ENCODE measurements at regions of chr5 and their contacts with region 1.

Region 1: GRCh38 chr5:132490486-132491367 is at the start of gene IRF1:
- DNase-seq: peak; percentile 97 to 98 (median 98)
- ATAC-seq: peak; percentile 87 to 94 (median 92)
- H3K4me3 ChIP-seq: peak within 1 kb of the TSS; percentile 63 to 97 (median 86)
- H3K27ac ChIP-seq: peak within 1 kb of the TSS; percentile 94 to 100 (median 98)
- H3K4me1 ChIP-seq: peaks cover 12 to 81% (median 61%) of the 10 kb centered on the region in 12 donors
- H3K27me3 ChIP-seq: no peaks in the 10 kb centered on the region
- CTCF ChIP-seq: peak in 2 of 12 donors; percentile 12 to 45
- POLR2A ChIP-seq: peak; percentile 53 to 96
- total RNA-seq, gene IRF1: 9.2 to 190 (median 18.4) TPM

Region 2: DNA sequence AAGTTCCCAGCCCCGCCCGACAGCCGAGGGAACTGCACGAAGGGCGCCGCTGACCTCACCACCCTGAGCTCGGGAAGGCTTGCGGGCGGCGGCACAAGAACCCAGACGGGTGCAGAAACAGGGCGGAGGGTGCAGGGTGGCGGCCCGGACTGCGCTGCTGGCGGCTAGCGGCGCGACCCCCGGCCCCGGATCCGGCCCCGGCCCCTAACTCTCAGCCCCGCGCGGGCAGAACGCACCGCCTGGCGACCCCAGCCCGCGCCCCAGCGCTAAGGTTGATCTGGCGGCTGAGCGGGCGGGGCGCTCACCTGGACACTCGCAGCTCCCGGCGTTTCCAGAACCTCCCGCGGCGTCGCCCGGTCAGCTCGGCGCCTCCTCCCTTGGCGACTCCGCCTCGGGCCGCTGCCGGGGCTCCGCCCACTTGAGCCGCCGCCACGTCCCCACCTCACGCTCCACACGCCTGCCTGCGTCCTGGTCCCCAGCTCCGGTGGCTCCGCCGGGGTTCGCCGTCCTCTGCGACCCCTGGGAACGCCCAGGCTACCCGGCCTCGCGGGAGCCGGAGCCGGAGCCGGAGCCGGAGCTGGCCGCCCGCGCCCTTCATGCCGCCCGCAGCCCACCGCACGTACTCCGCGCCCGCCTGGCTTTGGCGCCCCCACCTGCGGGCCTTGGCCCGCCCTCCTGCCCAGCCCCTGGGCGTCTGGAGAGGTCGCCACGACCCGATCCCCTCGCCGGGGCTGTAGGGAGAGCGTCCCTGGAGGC is 263.1 kb before region 1 on chr5 and contains the start of gene P4HA2:
- intact Hi-C with region 1: loop called in 1 of 10 experiments (anchors 10 kb)
- DNase-seq: peak; percentile 84 to 91 (median 89)
- ATAC-seq: peak; percentile 63 to 89 (median 82)
- H3K4me3 ChIP-seq: peak within 1 kb of the TSS; percentile 67 to 98 (median 86)
- H3K27ac ChIP-seq: peak within 1 kb of the TSS; percentile 84 to 98 (median 94)
- H3K4me1 ChIP-seq: peaks cover 10 to 59% (median 47%) of the 10 kb centered on the region in 12 donors
- H3K27me3 ChIP-seq: peaks cover 0 to 8% (median 0%) of the 10 kb centered on the region in 9 donors
- CTCF ChIP-seq: peak in 5 of 12 donors; percentile 18 to 37 (median 30)
- POLR2A ChIP-seq: peak in 1 of 2 donors; percentile 71
- total RNA-seq, gene P4HA2: 41.2 to 80.7 (median 55.7) TPM

Region 3: DNA sequence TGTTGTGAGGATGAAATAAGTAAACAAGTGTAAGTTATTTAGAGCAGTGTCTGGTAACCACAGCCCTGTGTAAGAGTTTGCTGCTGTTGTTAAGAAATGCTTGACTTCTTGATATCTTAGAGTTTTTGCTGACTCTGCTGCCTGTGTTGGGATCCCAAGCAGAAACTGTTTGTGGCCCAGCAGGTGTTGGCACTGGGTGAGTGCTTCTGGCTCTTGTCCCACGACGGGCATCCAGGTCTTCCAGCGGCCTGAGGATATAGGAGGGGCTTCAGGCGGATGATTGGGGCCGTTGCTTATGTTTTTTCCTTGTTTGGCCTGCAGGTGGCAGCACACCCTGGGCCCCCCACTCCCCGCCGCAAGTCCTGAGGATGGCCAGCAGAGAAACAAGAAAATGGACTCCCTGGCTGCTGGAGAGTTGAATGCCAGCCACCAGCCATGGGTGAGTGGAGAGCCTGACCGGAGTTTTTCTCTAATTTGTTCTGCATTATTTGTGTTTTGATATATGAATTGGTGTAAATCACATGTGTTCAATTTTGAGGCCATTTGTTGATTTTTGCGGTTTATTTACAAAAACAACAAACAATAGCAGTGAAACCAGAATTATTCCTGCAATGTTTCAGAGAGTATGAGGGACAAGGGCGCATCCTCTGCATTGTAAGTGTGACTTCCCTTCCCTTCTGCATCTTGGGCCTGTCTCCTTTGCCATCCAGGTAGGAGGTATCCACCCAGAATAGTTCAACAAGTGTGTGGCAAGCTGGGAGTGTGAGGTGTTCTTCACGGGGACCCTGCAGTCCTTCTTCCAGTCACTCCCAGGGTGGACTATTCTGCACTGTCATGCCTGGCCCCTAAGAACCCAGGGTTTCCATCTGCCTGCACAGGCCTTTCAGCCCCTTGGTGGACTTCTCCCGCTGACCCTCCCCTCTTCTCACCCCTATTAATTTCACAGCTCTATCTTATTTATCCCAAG is 70.9 kb before region 1 on chr5:
- intact Hi-C with region 1: loop called in 9 of 10 experiments (anchors 1 to 5 kb)
- DNase-seq: peak; percentile 74 to 80 (median 77)
- ATAC-seq: peak; percentile 49 to 73 (median 64)
- H3K4me3 ChIP-seq: peak overlapping the region in 2 of 12 donors; percentile 17 to 18
- H3K27ac ChIP-seq: peak overlapping the region; percentile 40 to 99 (median 82)
- H3K4me1 ChIP-seq: peaks cover 15 to 100% (median 91%) of the 10 kb centered on the region in 12 donors
- H3K27me3 ChIP-seq: no peaks in the 10 kb centered on the region
- CTCF ChIP-seq: peak; percentile 82 to 93 (median 90)
- POLR2A ChIP-seq: no peak

Region 4: GRCh38 chr5:132426525-132427138 is 64.1 kb before region 1 on chr5:
- intact Hi-C with region 1: loop called in 4 of 10 experiments (anchors 2 to 5 kb)
- DNase-seq: peak; percentile 51 to 88 (median 82)
- ATAC-seq: peak in 3 of 4 donors; percentile 56 to 74 (median 71)
- H3K4me3 ChIP-seq: peak overlapping the region in 1 of 12 donors; percentile 27
- H3K27ac ChIP-seq: peak overlapping the region; percentile 22 to 98 (median 81)
- H3K4me1 ChIP-seq: peaks cover 35 to 100% (median 90%) of the 10 kb centered on the region in 12 donors
- H3K27me3 ChIP-seq: no peaks in the 10 kb centered on the region
- CTCF ChIP-seq: peak in 7 of 12 donors; percentile 15 to 47 (median 28)
- POLR2A ChIP-seq: no peak

Region 5: DNA sequence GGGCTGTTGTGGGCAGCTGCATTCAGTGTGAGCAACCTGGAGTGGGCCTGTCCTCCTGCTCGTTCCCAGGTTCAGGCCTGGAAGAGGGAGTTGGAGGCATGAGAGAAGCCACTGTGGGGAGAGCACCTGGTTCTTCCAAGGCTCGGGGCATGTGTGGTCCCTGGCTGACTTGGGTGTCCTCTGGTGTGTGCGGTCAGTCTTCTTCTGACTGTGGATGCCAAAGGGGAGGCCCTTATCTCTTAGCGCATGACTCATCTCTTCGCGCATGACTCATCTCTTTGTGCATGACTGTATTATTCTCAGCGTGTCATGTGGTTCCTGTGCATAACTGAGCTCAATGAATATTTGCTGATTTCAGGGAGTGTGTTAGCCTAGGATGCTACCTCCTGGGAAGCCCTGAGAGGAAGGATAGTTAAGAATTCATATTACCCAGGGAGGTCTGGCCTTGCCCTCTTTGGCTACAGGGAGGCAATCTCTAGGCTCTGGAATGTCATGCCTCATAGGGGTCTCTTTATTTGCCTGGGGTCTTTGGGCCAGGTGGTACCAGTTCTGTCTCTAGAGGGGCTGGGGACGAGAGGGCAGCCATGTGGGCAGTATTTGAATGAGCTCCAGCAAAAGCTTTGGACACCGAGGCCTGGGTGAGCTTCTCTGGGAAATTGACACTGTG is 749.8 kb after region 1 on chr5:
- intact Hi-C with region 1: no loop called
- DNase-seq: peak in 2 of 5 donors; percentile 35 to 40
- ATAC-seq: peak in 3 of 4 donors; percentile 36 to 83 (median 75)
- H3K4me3 ChIP-seq: no peak overlapping the region
- H3K27ac ChIP-seq: peak overlapping the region in 1 of 12 donors; percentile 42
- H3K4me1 ChIP-seq: peaks cover 0 to 14% (median 0%) of the 10 kb centered on the region in 12 donors
- H3K27me3 ChIP-seq: peaks cover 0 to 4% (median 0%) of the 10 kb centered on the region in 9 donors
- CTCF ChIP-seq: no peak
- POLR2A ChIP-seq: no peak